ENCODE measurements at regions of chr19 and their contacts with region 1.

Region 1: DNA sequence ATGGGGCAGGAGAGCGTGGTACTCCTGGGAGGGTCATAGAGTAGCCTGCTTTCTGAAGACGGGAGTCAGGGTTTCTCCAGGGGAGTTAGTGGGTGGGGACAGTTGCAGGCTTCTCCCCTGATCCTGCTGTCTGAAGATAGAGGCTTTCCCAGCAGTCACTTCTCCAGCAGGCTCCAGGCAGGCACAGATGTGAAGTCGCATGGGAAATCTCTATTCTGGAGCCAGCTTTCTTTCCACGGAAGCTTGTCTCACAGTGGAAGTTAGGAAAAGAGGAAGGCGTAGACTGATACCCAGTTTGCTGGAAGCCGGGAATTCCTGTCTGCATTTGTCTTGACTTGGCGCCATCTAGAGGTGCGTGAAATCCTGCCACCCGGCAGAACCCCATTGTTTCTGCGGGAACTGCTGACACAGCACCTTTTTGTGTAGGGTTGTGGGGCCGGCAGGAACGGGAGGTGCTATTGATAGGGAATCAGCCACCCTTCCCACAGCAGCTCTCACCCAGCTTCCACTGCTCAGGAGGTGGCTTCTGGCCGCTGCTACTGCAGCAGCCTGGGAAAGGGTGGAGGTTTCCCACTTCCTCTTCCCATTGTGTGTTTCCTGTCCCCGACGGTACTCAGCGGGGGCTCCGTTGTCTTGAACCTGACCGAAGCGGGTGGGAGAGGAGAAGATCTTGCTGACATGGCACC is 28.5 kb upstream of the NPAS1 start:
- DNase-seq: peak; percentile 51
- H3K4me3 Mint-ChIP-seq: no peak overlapping the region
- H3K27ac Mint-ChIP-seq: no peak overlapping the region
- H3K4me1 Mint-ChIP-seq: peaks cover 19% of the 10 kb centered on the region
- H3K27me3 Mint-ChIP-seq: no peaks in the 10 kb centered on the region

Region 2: DNA sequence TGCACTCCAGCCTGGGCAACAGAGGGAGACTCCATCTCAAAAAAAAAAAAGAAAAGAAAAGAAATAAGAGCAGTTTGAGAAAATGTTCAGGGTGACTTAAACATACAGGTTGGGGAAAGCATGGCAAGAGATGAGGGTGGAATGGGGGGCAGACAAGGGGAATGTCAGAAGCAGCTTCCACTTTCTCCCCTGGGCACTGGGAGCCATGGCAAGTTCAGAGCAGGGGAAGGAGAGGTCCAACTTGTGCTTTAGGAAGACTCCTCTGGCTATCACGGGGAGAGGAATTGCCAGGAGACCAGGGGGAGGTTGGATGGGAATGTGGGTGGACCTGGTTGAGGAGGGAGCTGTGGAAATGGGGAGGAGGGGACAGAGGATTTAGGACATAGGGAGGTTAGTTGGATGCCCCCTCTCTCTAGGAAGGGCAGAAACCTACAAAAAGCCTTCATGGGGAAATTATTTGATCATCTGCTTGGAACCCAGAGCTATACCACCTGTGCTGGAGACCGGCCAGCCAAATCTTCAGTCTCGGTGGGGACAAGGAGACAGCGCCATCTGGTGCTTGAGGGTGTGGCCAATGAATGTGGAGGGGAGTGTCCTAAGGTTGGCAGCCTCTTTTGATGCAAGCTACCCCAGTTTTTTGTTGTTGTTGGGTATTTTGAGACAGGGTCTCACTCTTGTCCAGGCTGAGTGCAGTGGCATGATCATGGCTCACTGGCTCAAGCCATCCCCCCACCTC is 237.5 kb before region 1 on chr19:
- intact Hi-C with region 1: loop called (anchors 1 kb)
- DNase-seq: peak; percentile 56
- H3K4me3 Mint-ChIP-seq: no peak overlapping the region
- H3K27ac Mint-ChIP-seq: no peak overlapping the region
- H3K4me1 Mint-ChIP-seq: peaks cover 11% of the 10 kb centered on the region
- H3K27me3 Mint-ChIP-seq: no peaks in the 10 kb centered on the region

Region 3: DNA sequence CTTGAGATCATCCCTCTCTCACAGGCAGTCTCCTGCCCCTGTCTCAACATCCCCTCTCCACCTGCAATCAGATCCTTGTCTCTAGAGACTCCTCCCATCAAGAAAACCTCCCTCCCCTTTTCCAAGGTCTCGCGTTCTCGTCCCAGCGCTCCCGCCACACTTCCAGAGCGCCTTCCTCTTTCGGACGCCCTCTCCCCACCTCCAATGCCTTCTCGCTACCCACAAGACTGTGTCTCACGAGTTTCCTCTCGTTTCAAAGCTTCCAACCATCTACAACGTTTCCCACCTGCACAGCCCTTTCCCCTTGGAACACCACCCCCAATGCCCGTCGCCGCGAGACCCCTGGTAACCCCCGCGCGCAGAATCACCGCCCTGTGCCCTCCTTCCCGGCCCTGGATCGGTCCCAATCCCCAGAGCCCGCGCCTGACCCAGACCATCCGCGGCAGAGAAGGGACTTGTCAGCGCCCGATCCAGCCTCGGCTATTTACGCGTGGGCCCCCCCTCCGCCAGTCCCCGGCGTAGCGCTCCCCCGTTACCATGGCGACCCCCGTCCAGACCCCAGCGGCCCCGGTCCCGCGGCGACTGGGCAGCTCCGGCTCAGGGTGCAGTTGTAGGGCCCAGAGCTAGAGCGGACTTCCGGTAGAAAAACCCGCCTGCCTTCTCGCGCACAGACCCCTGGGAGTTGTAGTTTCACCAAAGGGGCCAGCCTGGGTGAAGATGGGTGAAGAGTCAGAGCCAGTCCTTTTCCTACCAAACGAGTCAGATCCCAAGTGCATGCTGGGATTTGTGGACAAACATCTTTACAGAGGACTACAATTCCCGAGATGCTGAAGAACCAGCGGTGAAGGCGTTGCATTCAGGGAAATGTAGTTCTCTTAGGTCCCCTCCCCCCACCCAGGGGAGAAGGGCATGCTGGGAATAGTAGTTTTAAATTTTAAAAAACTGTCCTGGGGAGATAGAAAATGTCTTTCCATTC is 140.6 kb before region 1 on chr19 and contains the start of gene AP2S1:
- intact Hi-C with region 1: loop called (anchors 2 kb)
- DNase-seq: peak; percentile 92
- H3K4me3 Mint-ChIP-seq: peak within 1 kb of the TSS; percentile 92
- H3K27ac Mint-ChIP-seq: peak within 1 kb of the TSS; percentile 86
- H3K4me1 Mint-ChIP-seq: peaks cover 24% of the 10 kb centered on the region
- H3K27me3 Mint-ChIP-seq: peaks cover 6% of the 10 kb centered on the region
- total RNA-seq, gene AP2S1: 96.4 and 98.1 TPM in 2 replicates

Region 4: DNA sequence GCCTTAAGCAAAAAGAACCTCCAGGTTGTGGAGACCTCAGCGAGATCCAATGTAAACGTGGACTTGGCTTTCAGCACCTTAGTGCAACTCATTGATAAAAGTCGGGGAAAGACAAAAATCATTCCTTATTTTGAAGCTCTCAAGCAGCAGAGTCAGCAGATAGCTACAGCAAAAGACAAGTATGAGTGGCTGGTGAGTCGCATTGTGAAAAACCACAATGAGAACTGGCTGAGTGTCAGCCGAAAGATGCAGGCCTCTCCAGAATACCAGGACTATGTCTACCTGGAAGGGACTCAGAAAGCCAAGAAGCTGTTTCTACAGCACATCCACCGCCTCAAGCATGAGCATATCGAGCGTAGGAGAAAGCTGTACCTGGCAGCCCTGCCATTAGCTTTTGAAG is 71.8 kb before region 1 on chr19:
- intact Hi-C with region 1: loop called (anchors 2 kb)
- DNase-seq: no peak
- H3K4me3 Mint-ChIP-seq: no peak overlapping the region
- H3K27ac Mint-ChIP-seq: no peak overlapping the region
- H3K4me1 Mint-ChIP-seq: peaks cover 37% of the 10 kb centered on the region
- H3K27me3 Mint-ChIP-seq: no peaks in the 10 kb centered on the region

Region 5: DNA sequence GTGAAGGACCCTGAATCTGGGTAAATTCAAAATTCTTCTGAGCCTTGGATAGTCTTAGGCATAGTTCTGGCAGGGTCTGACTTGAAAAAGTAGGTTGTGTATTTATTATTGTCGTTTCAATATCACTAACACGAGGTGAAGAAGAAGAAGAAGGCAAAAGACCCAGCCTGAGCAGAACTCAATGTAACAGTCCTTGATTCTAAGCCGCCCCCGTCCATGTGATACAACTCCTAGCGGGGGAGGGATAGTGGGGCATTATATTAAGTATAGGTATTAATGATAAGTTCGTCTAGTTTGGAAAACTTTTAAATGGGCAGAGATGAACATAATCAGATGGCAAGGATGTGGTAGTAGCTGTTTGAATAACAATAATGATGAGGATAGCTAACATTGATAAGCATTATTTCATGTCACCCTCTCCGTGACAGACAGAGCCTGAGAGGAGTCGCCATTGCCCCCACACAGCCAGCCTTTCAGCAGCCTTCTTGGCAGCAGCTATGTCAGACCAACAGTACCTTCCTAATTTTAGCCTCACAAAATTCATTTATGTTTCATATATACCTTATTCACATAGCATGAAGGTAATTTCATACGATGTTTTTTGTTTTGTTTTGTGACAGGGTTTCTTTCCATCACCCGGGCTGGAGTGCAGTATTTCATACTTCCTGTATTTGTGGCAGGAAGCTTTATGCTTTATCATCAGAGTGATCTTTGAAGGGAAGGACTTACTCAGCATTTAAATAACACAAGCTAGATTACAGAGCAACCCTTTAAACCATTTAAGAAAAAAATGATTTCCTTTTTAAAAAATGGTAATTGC is 35.9 kb before region 1 on chr19:
- intact Hi-C with region 1: loop called (anchors 5 kb)
- DNase-seq: peak; percentile 43
- H3K4me3 Mint-ChIP-seq: peak overlapping the region; percentile 88
- H3K27ac Mint-ChIP-seq: peak overlapping the region; percentile 93
- H3K4me1 Mint-ChIP-seq: peaks cover 79% of the 10 kb centered on the region
- H3K27me3 Mint-ChIP-seq: no peaks in the 10 kb centered on the region

Region 6: DNA sequence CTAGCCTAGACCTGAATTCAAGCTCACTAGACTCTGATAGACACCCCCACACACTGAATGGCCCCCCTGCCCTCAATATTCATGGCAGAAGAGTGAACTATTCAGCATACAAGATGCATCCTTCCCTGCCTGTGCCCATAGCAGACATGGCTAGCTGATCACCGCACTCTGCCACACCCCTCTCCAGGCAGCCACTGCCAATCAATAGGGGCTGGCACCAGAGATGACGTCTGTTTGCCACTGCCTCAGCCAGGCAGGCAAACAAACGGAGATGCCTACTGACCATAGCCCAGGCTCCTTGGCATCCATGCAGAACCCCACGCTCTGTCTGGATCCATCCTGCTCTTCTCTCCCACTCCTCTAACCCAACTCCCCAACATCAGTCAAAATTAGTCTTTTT is 14.7 kb after region 1 on chr19:
- intact Hi-C with region 1: no loop called
- DNase-seq: no peak
- H3K4me3 Mint-ChIP-seq: no peak overlapping the region
- H3K27ac Mint-ChIP-seq: no peak overlapping the region
- H3K4me1 Mint-ChIP-seq: no peaks in the 10 kb centered on the region
- H3K27me3 Mint-ChIP-seq: peaks cover 21% of the 10 kb centered on the region

Region 7: DNA sequence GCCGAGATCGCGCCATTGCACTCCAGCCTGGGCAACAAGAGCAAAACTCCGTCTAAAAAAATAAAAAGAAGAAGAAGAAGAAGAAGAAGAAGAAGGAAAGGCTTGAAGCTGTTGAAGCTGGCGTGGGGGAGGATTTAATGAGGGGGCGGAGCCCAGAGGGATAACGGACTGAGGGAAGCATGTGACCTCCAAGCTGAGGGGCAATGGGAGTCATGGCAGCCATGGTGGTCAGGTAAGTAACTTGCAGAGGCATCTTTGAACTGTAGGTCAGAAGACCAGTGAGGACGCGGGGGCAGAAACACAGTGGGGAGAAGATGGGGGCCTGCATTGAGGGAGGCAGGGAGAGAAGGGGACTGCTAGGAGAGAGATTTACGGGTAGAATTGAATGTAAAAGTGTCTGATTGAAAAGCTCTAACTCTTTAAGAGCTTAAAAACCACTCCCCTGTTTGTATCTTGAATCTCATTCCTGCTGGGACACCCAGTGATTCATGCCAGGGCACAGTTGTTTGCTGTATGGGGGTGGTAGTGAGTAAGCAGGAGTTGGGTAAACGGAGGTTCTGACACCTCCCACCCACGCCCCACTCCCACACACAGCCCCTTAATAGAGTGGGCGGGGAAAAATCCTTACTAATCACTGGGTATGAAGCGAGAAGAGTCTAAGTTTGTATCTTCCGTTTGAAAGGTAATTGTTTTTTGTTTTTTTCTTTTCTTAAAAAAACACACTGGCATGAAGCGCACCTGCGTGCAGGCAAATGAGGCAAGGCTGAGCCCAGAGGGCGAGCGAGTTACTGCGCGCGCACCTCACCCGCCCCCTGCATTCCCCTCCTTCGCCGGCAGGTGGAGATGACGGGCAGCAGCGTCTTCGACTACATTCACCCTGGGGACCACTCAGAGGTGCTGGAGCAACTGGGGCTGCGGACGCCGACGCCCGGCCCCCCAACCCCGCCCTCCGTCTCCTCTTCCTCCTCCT is 44.3 kb after region 1 on chr19:
- intact Hi-C with region 1: no loop called
- DNase-seq: peak; percentile 93
- H3K4me3 Mint-ChIP-seq: peak overlapping the region; percentile 86
- H3K27ac Mint-ChIP-seq: peak overlapping the region; percentile 92
- H3K4me1 Mint-ChIP-seq: peaks cover 24% of the 10 kb centered on the region
- H3K27me3 Mint-ChIP-seq: peaks cover 14% of the 10 kb centered on the region

Region 8: GRCh38 chr19:47112997-47113849 is 122.1 kb after region 1 on chr19 and contains the start of gene ZC3H4:
- intact Hi-C with region 1: no loop called
- DNase-seq: peak; percentile 100
- H3K4me3 Mint-ChIP-seq: peak within 1 kb of the TSS; percentile 92
- H3K27ac Mint-ChIP-seq: peak within 1 kb of the TSS; percentile 99
- H3K4me1 Mint-ChIP-seq: peaks cover 33% of the 10 kb centered on the region
- H3K27me3 Mint-ChIP-seq: no peaks in the 10 kb centered on the region
- total RNA-seq, gene ZC3H4: 111 and 114 TPM in 2 replicates